ENCODE measurements at regions of chr2 and their contacts with region 1.

Region 1: DNA sequence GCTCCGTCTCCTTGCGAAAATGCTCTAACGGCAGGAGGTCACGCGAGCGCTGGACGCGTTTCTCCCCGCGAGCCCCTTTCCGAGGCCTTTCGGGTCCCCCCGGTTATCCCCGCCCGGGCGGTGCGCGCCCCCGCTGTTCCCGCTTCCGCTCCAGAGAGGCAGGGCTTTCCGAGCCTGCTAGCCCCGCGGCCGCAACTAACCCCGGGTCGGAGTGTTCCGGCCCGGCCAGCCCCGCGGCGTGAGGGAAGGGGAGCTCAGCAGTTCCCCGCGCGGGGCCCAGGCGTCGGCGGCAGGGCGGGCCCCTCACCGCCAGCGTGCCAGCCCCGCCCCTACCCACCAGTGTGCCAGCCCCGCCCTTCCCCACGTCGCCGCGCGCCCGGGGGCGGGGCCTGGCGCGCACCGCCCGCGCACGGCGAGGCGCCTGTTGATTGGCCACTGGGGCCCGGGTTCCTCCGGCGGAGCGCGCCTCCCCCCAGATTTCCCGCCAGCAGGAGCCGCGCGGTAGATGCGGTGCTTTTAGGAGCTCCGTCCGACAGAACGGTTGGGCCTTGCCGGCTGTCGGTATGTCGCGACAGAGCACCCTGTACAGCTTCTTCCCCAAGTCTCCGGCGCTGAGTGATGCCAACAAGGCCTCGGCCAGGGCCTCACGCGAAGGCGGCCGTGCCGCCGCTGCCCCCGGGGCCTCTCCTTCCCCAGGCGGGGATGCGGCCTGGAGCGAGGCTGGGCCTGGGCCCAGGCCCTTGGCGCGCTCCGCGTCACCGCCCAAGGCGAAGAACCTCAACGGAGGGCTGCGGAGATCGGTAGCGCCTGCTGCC is at the start of gene MSH6:
- DNase-seq: peak; percentile 93
- ATAC-seq: peak; percentile 89
- H3K4me3 Mint-ChIP-seq: peak within 1 kb of the TSS; percentile 92
- H3K27ac Mint-ChIP-seq: peak within 1 kb of the TSS; percentile 83
- H3K4me1 Mint-ChIP-seq: peaks cover 22% of the 10 kb centered on the region
- H3K27me3 Mint-ChIP-seq: no peaks in the 10 kb centered on the region
- CTCF ChIP-seq: no peak
- total RNA-seq, gene MSH6: 40.6 and 42.1 TPM in 2 replicates

Region 2: DNA sequence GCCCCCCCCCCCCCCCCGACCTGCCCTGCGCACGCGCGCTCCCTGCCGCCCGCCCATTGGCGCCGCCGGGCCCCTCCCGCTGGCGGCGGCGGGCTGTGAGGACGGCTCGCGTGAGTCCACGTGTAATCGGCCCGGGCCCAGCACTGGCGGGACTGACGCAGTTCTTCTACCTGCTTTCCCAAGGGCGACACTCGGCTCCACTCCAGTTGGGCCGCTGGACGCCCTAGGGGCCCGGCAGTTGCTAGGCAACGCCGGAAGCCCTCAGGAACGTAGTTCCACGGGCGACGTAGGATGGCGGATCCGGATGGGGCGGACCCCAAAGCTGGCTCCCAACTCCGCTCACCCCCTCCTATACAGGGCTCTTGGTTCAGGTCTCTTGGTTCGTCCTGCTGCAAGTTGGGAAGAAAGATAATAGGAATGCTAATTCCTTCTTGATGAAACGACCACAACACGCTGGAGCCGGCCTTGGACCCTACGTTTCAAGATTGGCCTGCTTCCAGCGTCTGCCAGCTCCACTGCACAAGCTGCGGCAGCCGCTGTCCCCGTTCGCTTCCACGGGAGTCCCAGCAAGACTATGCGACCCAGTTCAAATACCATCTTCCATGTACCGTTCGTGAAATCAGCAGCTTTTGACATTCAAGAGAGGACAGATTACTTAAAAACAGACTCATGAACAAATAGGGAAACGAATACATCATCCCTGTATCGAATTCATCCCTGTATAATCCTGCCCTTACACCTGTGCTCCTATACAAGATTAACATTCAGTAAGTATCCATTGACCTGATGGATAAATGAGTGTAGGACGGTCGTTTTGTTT is 866.9 kb before region 1 on chr2:
- CTCF ChIA-PET with region 1: no interaction called
- POLR2A ChIA-PET with region 1: no interaction called
- intact Hi-C with region 1: loop called (anchors 5 kb)
- DNase-seq: peak; percentile 80
- ATAC-seq: peak; percentile 83
- H3K4me3 Mint-ChIP-seq: peak overlapping the region; percentile 90
- H3K27ac Mint-ChIP-seq: peak overlapping the region; percentile 81
- H3K4me1 Mint-ChIP-seq: peaks cover 65% of the 10 kb centered on the region
- H3K27me3 Mint-ChIP-seq: no peaks in the 10 kb centered on the region
- CTCF ChIP-seq: no peak

Region 3: GRCh38 chr2:46984642-46985476 is 798.0 kb before region 1 on chr2:
- CTCF ChIA-PET with region 1: no interaction called
- POLR2A ChIA-PET with region 1: interaction called, 6 read pairs
- intact Hi-C with region 1: loop called (anchors 5 kb)
- DNase-seq: no peak
- ATAC-seq: peak; percentile 25
- H3K4me3 Mint-ChIP-seq: peak overlapping the region; percentile 76
- H3K27ac Mint-ChIP-seq: peak overlapping the region; percentile 98
- H3K4me1 Mint-ChIP-seq: peaks cover 87% of the 10 kb centered on the region
- H3K27me3 Mint-ChIP-seq: no peaks in the 10 kb centered on the region
- CTCF ChIP-seq: no peak

Region 4: DNA sequence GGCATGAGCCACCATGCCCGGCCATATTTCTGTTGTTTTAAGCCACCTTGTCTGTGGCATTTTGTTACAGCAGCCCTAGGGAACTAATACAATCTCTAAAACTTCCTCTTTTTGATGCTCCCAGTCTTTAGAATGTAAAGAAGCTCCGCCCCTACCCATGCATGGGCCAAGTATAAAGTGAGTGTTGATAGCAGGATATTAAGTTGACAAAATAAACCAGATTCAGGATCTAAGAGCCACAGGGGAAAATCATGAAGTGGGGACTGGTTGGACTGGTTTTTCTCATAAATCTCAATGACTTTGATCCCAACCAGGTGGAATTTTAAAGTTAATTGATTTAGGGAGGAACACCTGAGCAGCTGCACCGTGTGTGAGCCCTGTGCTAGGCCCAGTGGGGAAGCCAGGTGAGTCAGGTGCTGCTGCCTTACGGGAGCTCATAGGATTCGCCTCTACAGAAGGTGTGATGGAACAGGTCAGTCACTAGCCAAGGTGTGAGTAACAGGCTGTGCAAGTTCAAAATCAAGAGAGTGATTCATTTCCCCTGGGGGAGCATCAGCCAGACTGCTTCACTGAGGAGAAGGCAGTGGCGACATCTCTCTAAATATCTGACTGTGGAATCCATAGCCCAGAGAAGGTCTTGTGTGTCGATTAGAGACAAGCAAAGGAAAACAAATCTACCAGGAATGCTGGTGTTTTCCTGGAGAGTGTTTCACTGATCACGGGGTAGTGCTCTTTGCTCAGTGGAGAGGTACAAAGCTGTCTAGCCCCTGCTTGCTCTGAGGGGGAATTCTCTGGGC is 442.9 kb before region 1 on chr2:
- CTCF ChIA-PET with region 1: interaction called, 3 read pairs
- POLR2A ChIA-PET with region 1: no interaction called
- intact Hi-C with region 1: loop called (anchors 5 kb)
- DNase-seq: no peak
- ATAC-seq: peak; percentile 30
- H3K4me3 Mint-ChIP-seq: no peak overlapping the region
- H3K27ac Mint-ChIP-seq: no peak overlapping the region
- H3K4me1 Mint-ChIP-seq: peaks cover 30% of the 10 kb centered on the region
- H3K27me3 Mint-ChIP-seq: peaks cover 7% of the 10 kb centered on the region
- CTCF ChIP-seq: no peak

Region 5: DNA sequence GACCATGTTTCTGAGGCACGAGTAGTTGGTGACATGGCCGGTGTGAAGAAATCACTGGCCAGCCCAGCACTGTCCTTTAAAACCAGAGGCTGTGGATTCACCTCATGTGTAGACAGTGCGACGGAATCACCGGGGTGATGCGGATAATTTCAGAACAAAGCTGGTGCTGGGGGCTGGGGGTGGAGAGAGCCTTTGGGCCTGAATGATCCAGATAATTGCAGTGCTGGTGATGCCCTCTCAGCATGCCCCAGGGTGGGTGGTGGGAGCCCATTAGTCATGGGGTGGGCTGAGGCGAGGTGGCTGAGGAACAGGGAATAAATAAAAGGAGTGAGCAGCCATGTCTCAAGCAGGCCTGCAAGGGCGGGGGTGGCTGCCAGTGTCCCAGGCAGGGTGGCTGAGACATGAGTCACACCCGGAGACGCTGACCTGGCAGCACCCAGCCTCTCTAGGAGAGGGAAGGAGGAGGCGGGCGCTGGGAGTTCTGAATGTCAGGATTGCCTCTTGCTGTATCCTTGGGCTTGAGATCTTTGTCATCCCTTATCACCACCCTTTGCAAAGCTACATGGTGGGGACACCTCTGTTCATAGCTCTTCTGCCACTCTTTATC is 151.0 kb before region 1 on chr2:
- CTCF ChIA-PET with region 1: no interaction called
- POLR2A ChIA-PET with region 1: no interaction called
- intact Hi-C with region 1: no loop called
- DNase-seq: no peak
- ATAC-seq: no peak
- H3K4me3 Mint-ChIP-seq: no peak overlapping the region
- H3K27ac Mint-ChIP-seq: no peak overlapping the region
- H3K4me1 Mint-ChIP-seq: peaks cover 4% of the 10 kb centered on the region
- H3K27me3 Mint-ChIP-seq: no peaks in the 10 kb centered on the region
- CTCF ChIP-seq: no peak

Region 6: GRCh38 chr2:47798631-47799030 is 15.8 kb after region 1 on chr2:
- CTCF ChIA-PET with region 1: no interaction called
- POLR2A ChIA-PET with region 1: interaction called, 9 read pairs
- intact Hi-C with region 1: loop called (anchors 2 kb)
- DNase-seq: no peak
- ATAC-seq: no peak
- H3K4me3 Mint-ChIP-seq: no peak overlapping the region
- H3K27ac Mint-ChIP-seq: peak overlapping the region; percentile 13
- H3K4me1 Mint-ChIP-seq: no peaks in the 10 kb centered on the region
- H3K27me3 Mint-ChIP-seq: no peaks in the 10 kb centered on the region
- CTCF ChIP-seq: no peak

Region 7: GRCh38 chr2:47815764-47816163 is 32.9 kb after region 1 on chr2:
- CTCF ChIA-PET with region 1: no interaction called
- POLR2A ChIA-PET with region 1: no interaction called
- intact Hi-C with region 1: loop called (anchors 5 kb)
- DNase-seq: no peak
- ATAC-seq: peak; percentile 91
- H3K4me3 Mint-ChIP-seq: no peak overlapping the region
- H3K27ac Mint-ChIP-seq: peak overlapping the region; percentile 69
- H3K4me1 Mint-ChIP-seq: peaks cover 18% of the 10 kb centered on the region
- H3K27me3 Mint-ChIP-seq: no peaks in the 10 kb centered on the region
- CTCF ChIP-seq: no peak

Region 8: DNA sequence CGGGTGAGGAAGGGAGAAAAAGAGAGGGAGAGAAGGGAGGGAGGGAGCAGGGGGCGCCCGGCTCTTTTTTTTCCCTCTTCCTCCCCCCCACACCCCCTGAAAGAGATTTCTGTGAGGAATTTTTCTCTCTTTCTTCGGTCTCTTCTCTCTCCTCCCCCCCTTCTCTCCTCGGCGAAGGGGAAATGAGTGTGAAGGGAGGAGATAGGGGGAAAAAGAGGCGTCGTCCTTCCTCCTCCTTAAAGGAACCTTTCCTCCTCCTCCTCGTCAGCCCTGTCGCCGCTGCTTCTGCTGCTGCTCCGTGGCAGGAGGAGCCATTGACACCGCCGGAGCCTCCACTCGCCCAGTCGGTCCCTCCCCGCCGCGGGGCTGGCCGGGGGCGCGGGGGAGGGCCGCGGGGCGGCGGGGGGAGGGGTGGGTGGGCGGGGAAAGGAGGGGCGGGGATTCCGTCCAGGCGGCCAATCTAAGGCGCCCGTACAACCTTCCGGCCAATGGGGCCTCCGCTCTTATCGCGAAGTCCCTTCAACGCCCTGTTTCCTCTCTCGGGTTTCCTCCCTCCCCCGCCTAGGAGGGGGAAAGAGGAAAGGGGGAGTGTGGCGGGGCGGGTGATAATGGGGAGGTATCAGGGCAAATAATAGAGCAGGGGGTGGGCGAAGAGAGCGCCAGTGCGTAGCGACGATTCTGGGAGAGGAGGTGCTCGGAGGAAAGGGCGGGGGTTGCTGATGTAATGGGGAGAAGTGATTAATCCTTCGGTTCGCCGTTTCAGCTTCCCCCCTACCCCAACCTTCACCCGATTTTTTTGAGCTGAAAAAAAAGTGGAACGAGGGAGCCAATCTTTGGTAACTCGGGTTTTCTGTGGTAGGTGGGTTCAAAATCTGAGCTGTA is 123.5 kb after region 1 on chr2 and contains the start of gene FBXO11:
- CTCF ChIA-PET with region 1: no interaction called
- POLR2A ChIA-PET with region 1: interaction called, 9 read pairs
- intact Hi-C with region 1: loop called (anchors 1 kb)
- DNase-seq: peak; percentile 85
- ATAC-seq: peak; percentile 85
- H3K4me3 Mint-ChIP-seq: peak within 1 kb of the TSS; percentile 93
- H3K27ac Mint-ChIP-seq: peak within 1 kb of the TSS; percentile 99
- H3K4me1 Mint-ChIP-seq: peaks cover 42% of the 10 kb centered on the region
- H3K27me3 Mint-ChIP-seq: no peaks in the 10 kb centered on the region
- CTCF ChIP-seq: no peak
- total RNA-seq, gene FBXO11: 77.8 and 89.1 TPM in 2 replicates

Measured in activated B cell treated with CpG ODN at 0.5 μM for 24 hours (primary cell).